Activated T-helper 1 cell treated with anti-CD3 and anti-CD28 coated beads, Interleukin-12 subunit alpha, Interleukin-12 subunit beta, Interleukin-2, Interleukin-4 antibody, amounts not matched to agents 30 ng/mL and 10 ng/mL and 1 ng/mL, durations not matched to agents 14 hours and 24 hours and 36 hours (primary cell): ENCODE measurements at regions of chr1 and their contacts with region 1.

Region 1: GRCh38 chr1:111755331-111756123 is at the start of gene DDX20:
- DNase-seq: peak; percentile 92
- H3K4me3 Mint-ChIP-seq: peak within 1 kb of the TSS; percentile 83
- H3K27ac Mint-ChIP-seq: peak within 1 kb of the TSS; percentile 97
- H3K4me1 Mint-ChIP-seq: peaks cover 35% of the 10 kb centered on the region
- H3K27me3 Mint-ChIP-seq: peaks cover 12% of the 10 kb centered on the region
- total RNA-seq, gene DDX20: 21.5 and 25.2 TPM in 2 replicates

Region 2: DNA sequence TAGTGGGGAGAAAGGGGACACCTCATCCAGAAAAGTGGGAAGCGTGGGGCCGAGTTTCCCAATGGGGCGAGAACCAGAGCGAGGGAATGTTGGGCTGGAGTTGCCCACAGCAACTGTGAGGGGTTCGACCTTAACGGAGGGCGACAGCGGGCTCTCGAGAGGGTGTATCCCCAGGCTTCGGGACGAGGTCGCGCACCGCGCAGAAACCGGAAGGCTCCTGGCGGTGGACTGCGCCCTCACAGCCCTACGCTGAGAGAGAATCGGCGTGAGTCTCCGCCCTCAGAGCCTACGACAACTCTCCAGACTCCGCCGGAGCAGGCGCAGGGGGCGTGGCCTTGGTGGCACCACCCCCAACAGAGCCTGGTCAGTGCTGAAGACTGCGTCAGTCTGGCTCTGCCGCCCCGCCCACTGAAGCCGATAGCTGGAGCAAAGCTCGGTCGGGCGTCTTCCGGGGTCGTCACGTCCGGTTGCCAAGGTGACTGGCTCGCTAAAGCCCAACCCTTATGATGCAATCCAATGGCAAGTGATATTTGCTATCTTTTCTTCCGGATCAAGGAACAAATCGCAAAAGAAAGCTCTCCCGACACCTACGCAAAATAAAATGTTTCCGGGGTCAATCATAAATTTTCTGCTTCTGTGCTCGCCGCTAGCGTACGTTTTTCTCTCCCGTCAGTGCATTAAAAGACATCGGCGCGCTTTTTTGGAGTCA is 791.7 kb before region 1 on chr1 and contains the start of gene LRIF1:
- intact Hi-C with region 1: loop called (anchors 5 kb)
- DNase-seq: peak; percentile 100
- H3K4me3 Mint-ChIP-seq: peak within 1 kb of the TSS; percentile 90
- H3K27ac Mint-ChIP-seq: peak within 1 kb of the TSS; percentile 96
- H3K4me1 Mint-ChIP-seq: peaks cover 43% of the 10 kb centered on the region
- H3K27me3 Mint-ChIP-seq: peaks cover 2% of the 10 kb centered on the region
- total RNA-seq, gene LRIF1: 13.8 and 14.8 TPM in 2 replicates

Region 3: GRCh38 chr1:111214074-111214801 is 541.3 kb before region 1 on chr1:
- intact Hi-C with region 1: loop called (anchors 1 kb)
- DNase-seq: no peak
- H3K4me3 Mint-ChIP-seq: peak overlapping the region; percentile 64
- H3K27ac Mint-ChIP-seq: peak overlapping the region; percentile 94
- H3K4me1 Mint-ChIP-seq: peaks cover 78% of the 10 kb centered on the region
- H3K27me3 Mint-ChIP-seq: no peaks in the 10 kb centered on the region

Region 4: GRCh38 chr1:111481387-111482221 is 273.9 kb before region 1 on chr1:
- intact Hi-C with region 1: loop called (anchors 2 kb)
- DNase-seq: peak; percentile 31
- H3K4me3 Mint-ChIP-seq: no peak overlapping the region
- H3K27ac Mint-ChIP-seq: no peak overlapping the region
- H3K4me1 Mint-ChIP-seq: peaks cover 20% of the 10 kb centered on the region
- H3K27me3 Mint-ChIP-seq: peaks cover 47% of the 10 kb centered on the region

Region 5: GRCh38 chr1:111592389-111593361 is 162.9 kb before region 1 on chr1:
- intact Hi-C with region 1: no loop called
- DNase-seq: peak; percentile 84
- H3K4me3 Mint-ChIP-seq: peak overlapping the region; percentile 25
- H3K27ac Mint-ChIP-seq: peak overlapping the region; percentile 91
- H3K4me1 Mint-ChIP-seq: peaks cover 76% of the 10 kb centered on the region
- H3K27me3 Mint-ChIP-seq: peaks cover 2% of the 10 kb centered on the region

Region 6: DNA sequence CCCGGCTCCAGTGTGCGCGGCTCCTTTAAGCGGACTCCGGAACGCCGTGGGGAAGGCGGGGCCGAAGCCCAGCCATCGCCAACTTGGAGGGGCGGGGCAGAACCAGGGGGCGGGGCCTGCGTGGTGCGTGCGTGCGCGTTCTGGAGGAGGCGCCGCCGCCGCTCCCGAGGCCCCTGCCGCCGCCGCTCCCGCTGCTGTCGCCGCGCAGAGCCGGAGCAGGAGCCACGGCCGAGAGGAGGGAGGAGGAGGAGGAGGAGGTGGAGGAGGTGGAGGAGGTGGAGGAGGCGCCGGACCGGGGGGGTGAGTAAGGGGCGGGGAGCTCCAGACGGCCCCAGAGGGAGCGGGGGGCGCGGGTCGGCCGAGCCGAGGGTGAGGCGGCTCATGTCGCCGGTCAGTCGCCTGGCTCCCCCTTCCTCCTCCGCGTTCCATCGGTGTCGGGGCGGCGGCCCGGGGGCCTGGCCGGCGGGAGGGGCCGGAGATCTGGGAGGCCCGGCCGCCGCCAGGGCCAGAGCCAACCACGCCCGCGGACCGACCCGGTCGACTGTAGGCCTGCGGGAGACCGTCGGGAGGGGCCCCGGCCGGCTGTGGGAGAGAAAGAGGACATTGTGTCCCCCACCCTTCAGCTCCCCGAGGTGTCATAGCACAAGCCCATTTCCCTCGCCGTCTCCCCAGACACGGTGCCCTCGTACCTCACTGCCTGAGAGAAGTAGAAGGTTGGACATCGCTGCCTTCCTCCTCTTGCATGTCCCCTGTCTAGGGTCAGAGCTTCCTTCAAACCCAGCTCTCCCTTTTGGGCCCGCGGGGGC is 135.7 kb before region 1 on chr1 and contains the start of gene RAP1A:
- intact Hi-C with region 1: loop called (anchors 1 kb)
- DNase-seq: peak; percentile 88
- H3K4me3 Mint-ChIP-seq: peak within 1 kb of the TSS; percentile 99
- H3K27ac Mint-ChIP-seq: peak within 1 kb of the TSS; percentile 93
- H3K4me1 Mint-ChIP-seq: peaks cover 76% of the 10 kb centered on the region
- H3K27me3 Mint-ChIP-seq: no peaks in the 10 kb centered on the region
- total RNA-seq, gene RAP1A: 326 and 348 TPM in 2 replicates

Region 7: GRCh38 chr1:111739194-111739924 is 16.2 kb before region 1 on chr1 and contains the start of gene INKA2:
- intact Hi-C with region 1: loop called (anchors 1 kb)
- DNase-seq: peak; percentile 78
- H3K4me3 Mint-ChIP-seq: peak within 1 kb of the TSS; percentile 91
- H3K27ac Mint-ChIP-seq: peak within 1 kb of the TSS; percentile 70
- H3K4me1 Mint-ChIP-seq: peaks cover 17% of the 10 kb centered on the region
- H3K27me3 Mint-ChIP-seq: peaks cover 43% of the 10 kb centered on the region
- total RNA-seq, gene INKA2: 1.3 and 1.7 TPM in 2 replicates

Region 8: GRCh38 chr1:111792249-111792648 is 36.7 kb after region 1 on chr1:
- intact Hi-C with region 1: no loop called
- DNase-seq: no peak
- H3K4me3 Mint-ChIP-seq: no peak overlapping the region
- H3K27ac Mint-ChIP-seq: no peak overlapping the region
- H3K4me1 Mint-ChIP-seq: no peaks in the 10 kb centered on the region
- H3K27me3 Mint-ChIP-seq: peaks cover 9% of the 10 kb centered on the region

Region 9: DNA sequence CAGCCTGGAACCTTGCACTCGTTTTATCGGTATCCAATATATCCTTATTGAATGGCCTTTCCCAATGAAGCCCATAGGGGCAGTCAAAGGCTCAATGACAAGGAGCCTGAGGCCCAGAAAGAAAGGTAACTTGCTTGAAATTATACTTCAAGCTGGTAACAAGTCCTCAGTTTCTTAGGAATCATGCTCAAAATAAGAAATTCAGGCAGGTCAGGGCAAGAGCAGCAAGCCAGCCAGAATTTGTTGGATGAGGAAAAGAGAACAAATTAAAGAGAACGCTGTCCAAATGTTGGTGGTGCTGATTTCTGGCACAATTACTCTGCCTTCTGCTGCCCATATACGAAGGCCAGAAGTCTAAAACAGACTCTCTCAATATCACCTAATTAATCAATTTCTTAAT is 77.8 kb after region 1 on chr1:
- intact Hi-C with region 1: no loop called
- DNase-seq: no peak
- H3K4me3 Mint-ChIP-seq: no peak overlapping the region
- H3K27ac Mint-ChIP-seq: no peak overlapping the region
- H3K4me1 Mint-ChIP-seq: no peaks in the 10 kb centered on the region
- H3K27me3 Mint-ChIP-seq: peaks cover 4% of the 10 kb centered on the region

Region 10: GRCh38 chr1:111878646-111879045 is 123.1 kb after region 1 on chr1:
- intact Hi-C with region 1: no loop called
- DNase-seq: no peak
- H3K4me3 Mint-ChIP-seq: no peak overlapping the region
- H3K27ac Mint-ChIP-seq: no peak overlapping the region
- H3K4me1 Mint-ChIP-seq: no peaks in the 10 kb centered on the region
- H3K27me3 Mint-ChIP-seq: peaks cover 4% of the 10 kb centered on the region